Right ventricle myocardium superior (tissue), 1 donor: ENCODE measurements at regions of chr20 and their contacts with region 1.

Region 1: GRCh38 chr20:3686867-3687321 is 5.1 kb upstream of the ADAM33 start:
- DNase-seq: peak; percentile 89
- ATAC-seq: peak; percentile 87

Region 2: GRCh38 chr20:3864518-3864917 is 177.6 kb after region 1 on chr20:
- intact Hi-C with region 1: loop called (anchors 10 kb)
- DNase-seq: no peak
- ATAC-seq: no peak

Region 3: GRCh38 chr20:3940905-3941304 is 254.0 kb after region 1 on chr20:
- intact Hi-C with region 1: no loop called
- DNase-seq: no peak
- ATAC-seq: no peak